Activated naive CD4-positive, alpha-beta T cell treated with anti-CD3 and anti-CD28 coated beads, Interleukin-2, amount 10 ng/mL, durations not matched to agents 7 days and 5 days (primary cell): ENCODE measurements at regions of chr7 and their contacts with region 1.

Region 1: GRCh38 chr7:44240983-44241510 is 40.3 kb downstream of the YKT6 start:
- DNase-seq: peak; percentile 79
- H3K4me3 Mint-ChIP-seq: peak overlapping the region; percentile 23
- H3K27ac Mint-ChIP-seq: no peak overlapping the region
- H3K4me1 Mint-ChIP-seq: peaks cover 5% of the 10 kb centered on the region
- H3K27me3 Mint-ChIP-seq: peaks cover 4% of the 10 kb centered on the region

Region 2: DNA sequence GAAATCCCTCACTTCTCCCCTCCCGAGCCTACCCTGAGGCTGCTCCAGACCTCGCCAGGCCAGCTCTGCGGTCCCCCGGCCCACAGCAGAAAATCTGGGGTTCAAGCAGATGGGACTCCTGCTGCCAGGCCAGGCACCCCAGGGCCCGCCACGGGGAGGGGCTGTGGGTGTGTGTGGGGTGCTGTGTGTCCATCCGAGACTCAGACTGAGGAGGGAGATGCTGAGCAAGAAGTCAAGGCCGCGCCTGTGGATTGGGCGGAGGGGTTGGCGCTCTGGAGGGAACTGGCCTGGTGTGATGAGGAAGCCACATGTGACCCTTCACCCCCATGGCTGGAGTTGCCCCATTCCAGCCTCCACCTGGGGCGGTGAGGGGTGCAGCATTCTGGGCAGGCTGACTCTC is 10.8 kb after region 1 on chr7:
- CTCF ChIA-PET with region 1: interaction called, 18 read pairs
- DNase-seq: no peak
- H3K4me3 Mint-ChIP-seq: no peak overlapping the region
- H3K27ac Mint-ChIP-seq: no peak overlapping the region
- H3K4me1 Mint-ChIP-seq: no peaks in the 10 kb centered on the region
- H3K27me3 Mint-ChIP-seq: peaks cover 3% of the 10 kb centered on the region

Region 3: DNA sequence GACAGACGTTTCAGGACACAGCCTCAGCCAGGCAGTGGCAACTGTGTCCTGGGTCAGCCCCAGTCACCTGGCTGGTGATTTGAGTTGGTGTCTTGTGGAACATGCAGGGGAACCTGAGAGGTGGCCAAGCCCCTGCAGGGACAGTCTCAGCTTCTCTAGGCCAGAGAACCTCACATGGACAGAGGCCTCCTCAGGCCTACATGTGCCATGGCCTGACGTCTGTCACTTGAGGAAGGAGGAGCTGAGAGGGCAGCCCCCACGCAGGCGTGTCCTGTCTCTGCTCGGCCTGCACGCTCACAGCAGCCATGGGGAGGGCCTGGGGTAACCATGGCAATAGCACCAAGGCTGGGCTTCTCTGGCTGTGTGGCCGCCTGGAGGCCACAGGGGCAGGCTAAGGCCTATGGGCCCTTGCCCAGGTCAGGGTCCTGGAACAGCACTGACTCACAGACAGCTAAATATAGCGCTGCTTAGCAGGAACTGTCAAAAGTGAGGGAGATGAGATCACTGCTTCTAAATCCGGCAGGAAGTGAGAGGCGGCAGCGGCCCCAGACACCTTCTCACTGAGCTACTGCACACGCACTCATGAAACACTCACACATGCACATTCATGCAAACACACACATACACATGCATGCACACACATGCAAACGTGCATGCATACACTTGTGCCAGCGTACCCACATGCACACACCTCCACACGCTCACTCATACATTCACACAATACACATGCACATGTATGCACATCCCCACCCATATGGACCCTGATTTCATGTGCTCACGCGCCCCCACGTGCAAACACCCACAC is 16.8 kb after region 1 on chr7:
- CTCF ChIA-PET with region 1: interaction called, 18 read pairs
- DNase-seq: peak; percentile 78
- H3K4me3 Mint-ChIP-seq: no peak overlapping the region
- H3K27ac Mint-ChIP-seq: peak overlapping the region; percentile 93
- H3K4me1 Mint-ChIP-seq: peaks cover 25% of the 10 kb centered on the region
- H3K27me3 Mint-ChIP-seq: no peaks in the 10 kb centered on the region

Region 4: GRCh38 chr7:44284216-44284615 is 43.2 kb after region 1 on chr7:
- CTCF ChIA-PET with region 1: no interaction called
- DNase-seq: peak; percentile 15
- H3K4me3 Mint-ChIP-seq: no peak overlapping the region
- H3K27ac Mint-ChIP-seq: no peak overlapping the region
- H3K4me1 Mint-ChIP-seq: no peaks in the 10 kb centered on the region
- H3K27me3 Mint-ChIP-seq: no peaks in the 10 kb centered on the region

Region 5: DNA sequence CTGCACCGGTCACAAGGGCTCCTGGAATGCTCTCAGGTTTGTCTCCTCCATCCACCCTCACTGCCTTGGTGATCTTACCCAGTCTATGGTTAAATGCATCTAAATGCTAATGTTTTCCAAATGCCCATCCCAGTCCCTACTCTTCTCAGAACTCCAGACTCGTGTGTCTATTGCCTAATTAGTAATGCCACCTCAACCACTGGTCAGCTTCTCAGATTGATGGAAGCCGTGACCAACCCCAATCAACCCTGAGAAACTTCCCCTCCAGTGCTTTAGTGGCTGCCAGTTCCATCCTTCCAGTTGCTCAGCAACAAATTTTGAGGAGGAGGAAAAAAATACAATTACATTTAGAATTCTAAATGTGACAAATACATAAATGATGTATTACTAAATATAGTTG is 230.8 kb after region 1 on chr7:
- CTCF ChIA-PET with region 1: interaction called, 26 read pairs
- DNase-seq: no peak
- H3K4me3 Mint-ChIP-seq: no peak overlapping the region
- H3K27ac Mint-ChIP-seq: peak overlapping the region; percentile 4
- H3K4me1 Mint-ChIP-seq: peaks cover 18% of the 10 kb centered on the region
- H3K27me3 Mint-ChIP-seq: no peaks in the 10 kb centered on the region

Region 6: GRCh38 chr7:44477063-44477830 is 236.2 kb after region 1 on chr7:
- CTCF ChIA-PET with region 1: interaction called, 26 read pairs
- DNase-seq: peak; percentile 75
- H3K4me3 Mint-ChIP-seq: no peak overlapping the region
- H3K27ac Mint-ChIP-seq: no peak overlapping the region
- H3K4me1 Mint-ChIP-seq: peaks cover 25% of the 10 kb centered on the region
- H3K27me3 Mint-ChIP-seq: no peaks in the 10 kb centered on the region

Region 7: DNA sequence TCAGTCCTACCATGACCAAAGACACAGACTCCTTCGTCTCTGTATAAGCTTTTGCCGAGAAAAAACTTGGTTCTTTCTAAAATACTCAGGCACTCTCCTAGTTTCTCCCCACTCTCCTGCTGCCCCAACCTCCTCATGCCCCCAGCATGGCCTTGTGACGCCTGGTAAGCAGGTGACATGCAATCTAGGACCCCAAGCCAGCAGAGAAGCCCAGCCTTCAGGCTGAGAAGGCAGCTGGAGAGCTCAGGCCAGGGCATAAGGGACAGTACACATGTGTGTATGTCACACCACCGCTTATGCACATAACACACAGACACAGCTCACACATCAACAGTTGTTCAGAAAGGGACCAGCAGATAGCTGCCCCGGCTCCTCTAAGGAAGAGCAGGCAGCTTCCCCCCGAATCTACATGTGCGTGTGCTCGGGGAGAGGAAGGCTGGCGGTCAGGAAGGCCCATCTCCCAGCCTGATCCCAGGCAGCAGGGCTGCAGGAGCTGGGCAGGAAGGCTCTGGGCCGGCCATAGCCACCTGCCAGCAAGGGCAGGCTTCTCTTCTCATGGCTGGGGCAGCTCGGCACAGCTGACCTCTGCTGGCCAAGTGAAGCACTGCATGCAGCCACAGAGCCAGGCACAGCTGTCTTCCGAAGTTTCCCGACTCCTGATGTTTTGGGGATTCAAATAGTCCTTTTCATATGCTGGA is 324.2 kb after region 1 on chr7:
- CTCF ChIA-PET with region 1: interaction called, 73 read pairs
- DNase-seq: peak; percentile 75
- H3K4me3 Mint-ChIP-seq: no peak overlapping the region
- H3K27ac Mint-ChIP-seq: peak overlapping the region; percentile 62
- H3K4me1 Mint-ChIP-seq: peaks cover 11% of the 10 kb centered on the region
- H3K27me3 Mint-ChIP-seq: no peaks in the 10 kb centered on the region